Aorta (tissue), 5 donors: ENCODE measurements at regions of chr4 and their contacts with region 1.

Region 1: DNA sequence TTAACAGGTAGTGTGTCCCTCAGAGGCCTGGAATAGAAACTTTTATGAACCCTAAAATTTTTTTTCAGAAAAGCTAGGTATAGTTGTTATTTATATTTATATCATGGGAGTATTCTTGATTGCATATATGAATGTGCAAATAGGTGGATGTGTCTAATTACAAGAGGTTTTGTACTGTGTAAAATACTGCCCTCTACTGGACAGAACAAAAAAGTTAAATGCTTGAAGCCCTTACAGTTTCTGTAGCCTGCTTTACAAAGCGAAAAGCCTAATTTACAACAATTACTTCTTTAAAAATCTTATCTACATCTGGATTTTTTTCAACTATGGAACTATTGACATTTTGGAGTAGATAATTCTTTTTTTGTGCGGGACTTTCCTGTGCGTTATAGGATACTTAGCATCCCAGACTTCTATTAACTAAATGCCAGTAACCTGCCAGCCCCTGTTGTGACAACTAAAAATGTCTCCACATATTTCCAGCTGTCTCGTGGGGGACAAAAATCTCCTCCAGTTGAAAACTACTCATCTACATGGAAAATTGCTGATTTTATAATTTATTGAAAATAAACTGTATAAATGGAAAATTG is 35.1 kb downstream of the ENPEP start:
- DNase-seq: no peak
- ATAC-seq: peak; percentile 76
- H3K4me3 ChIP-seq: no peak overlapping the region
- H3K27ac ChIP-seq: no peak overlapping the region
- H3K4me1 ChIP-seq: no peaks in the 10 kb centered on the region
- H3K27me3 ChIP-seq: no peaks in the 10 kb centered on the region

Region 2: DNA sequence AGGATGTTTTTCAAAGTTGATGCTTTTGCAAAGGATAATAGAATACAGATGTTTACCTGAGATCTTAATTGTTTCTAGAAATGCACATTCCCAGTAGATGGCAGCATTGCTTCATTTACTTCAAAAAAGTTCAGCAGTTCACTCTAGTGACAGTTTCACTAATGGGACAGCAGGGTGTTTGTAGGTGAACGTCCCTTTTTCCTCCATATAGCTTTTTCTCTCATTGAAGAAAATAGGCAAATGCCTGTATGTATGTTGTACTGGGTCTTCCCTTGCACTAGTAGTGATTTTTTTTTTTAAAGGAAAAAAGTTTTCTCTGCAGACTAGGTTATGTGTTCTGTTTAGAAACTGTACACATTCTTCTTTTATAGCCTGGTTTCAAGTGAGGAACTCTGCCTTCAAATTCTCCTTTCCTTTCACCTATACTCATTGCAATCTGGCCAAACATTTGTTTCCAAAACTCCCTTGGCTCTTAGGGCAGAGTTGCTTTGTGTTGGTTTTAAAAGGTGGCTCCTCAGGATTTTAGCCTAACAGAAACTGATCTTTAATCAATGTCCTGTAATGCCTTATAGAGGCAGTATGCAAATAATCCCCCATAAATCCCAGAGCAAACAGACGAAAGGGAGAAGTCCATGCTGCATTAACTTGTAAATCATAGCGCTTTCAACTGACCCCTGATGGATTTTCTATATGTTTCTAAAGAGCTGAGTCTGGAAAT is 512.0 kb before region 1 on chr4:
- intact Hi-C with region 1: loop called (anchors 2 kb)
- DNase-seq: no peak
- ATAC-seq: no peak
- H3K4me3 ChIP-seq: no peak overlapping the region
- H3K27ac ChIP-seq: no peak overlapping the region
- H3K4me1 ChIP-seq: no peaks in the 10 kb centered on the region
- H3K27me3 ChIP-seq: no peaks in the 10 kb centered on the region

Region 3: DNA sequence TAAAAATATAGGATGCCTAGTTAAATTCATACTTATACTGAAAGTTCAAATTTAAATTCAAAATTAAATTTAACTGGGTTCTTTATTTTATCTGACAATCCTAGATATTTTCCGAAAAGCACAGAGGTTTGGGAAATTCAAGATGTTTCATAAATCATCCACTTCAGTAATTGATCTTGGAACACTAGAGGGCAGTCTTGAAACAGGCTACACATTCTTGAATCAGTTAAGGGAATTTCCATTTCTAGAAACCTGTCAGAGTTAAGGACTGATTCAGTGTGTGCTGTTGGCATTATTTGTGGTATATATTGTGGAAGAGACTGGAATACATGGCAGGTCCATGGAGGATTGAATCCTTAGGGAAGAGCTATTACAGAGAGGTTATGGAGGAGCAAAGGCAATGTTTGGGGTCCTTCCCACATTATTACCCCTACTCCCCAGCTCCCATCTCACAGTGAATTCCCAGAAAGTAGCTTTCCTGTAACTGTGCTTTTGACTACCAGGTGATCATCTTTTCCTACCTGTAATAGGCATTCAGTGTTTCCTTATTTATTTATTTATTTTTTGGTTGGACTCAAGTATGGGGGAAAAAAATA is 505.5 kb before region 1 on chr4:
- intact Hi-C with region 1: loop called in 1 of 2 experiments (anchors 2 kb)
- DNase-seq: no peak
- ATAC-seq: no peak
- H3K4me3 ChIP-seq: no peak overlapping the region
- H3K27ac ChIP-seq: no peak overlapping the region
- H3K4me1 ChIP-seq: no peaks in the 10 kb centered on the region
- H3K27me3 ChIP-seq: no peaks in the 10 kb centered on the region

Region 4: DNA sequence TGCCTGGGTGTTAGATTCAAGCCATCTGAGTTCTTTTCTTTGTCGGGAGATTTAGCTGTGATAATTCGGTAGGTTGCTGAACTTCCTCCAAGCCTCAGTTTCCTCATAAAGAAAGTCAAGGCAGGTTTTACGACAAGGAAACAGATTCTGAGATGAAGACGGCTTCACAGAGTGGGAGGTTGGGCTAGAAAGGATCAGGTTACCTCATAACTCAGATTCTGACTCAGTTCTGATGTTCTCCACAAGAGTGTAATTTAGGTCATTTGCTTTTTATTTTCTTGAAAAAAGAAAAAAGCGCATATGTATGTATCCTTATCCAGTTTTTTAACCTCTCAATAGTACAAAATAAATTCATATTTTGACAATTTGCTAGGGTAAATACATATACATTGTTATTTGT is 265.5 kb before region 1 on chr4:
- intact Hi-C with region 1: no loop called
- DNase-seq: no peak
- ATAC-seq: no peak
- H3K4me3 ChIP-seq: no peak overlapping the region
- H3K27ac ChIP-seq: no peak overlapping the region
- H3K4me1 ChIP-seq: no peaks in the 10 kb centered on the region
- H3K27me3 ChIP-seq: no peaks in the 10 kb centered on the region

Region 5: DNA sequence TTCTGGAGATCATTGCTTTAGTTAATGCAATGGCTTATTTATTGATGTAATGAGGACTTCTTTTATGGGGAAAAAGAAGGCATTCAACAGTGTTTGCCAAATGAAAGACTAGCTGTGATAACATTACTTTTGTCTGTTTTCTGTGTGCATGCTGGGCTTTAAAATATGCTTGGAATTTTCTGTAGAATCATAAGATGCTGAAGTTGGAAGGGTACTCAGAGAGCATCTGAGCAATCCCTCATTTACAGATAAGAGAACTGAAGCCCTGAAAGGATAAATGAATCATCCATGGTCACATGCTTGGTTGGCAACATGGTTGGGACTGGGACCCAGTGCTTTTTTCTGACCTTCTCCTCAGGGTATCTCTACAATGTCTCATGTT is 143.2 kb after region 1 on chr4:
- intact Hi-C with region 1: no loop called
- DNase-seq: no peak
- ATAC-seq: no peak
- H3K4me3 ChIP-seq: no peak overlapping the region
- H3K27ac ChIP-seq: no peak overlapping the region
- H3K4me1 ChIP-seq: no peaks in the 10 kb centered on the region
- H3K27me3 ChIP-seq: peaks cover 0 to 1% of the 10 kb centered on the region in 2 donors

Region 6: DNA sequence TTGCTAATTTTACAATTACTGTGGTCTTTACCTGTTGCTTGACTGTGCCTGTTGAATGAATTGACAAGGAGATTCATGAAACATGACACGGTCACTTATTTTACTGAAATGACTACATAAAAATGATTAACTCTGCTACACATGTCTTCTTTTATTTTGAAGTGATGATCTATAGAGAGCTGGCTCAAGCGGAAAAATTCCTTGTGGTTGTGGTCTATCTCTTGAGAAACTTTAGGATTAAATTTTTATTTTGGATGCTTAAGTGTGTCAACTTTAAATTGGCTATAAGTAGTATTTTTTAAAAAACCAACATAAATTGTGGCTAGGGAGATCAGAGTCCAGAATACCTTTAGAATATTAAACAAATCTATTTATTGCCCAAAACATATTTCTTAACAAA is 243.7 kb after region 1 on chr4:
- intact Hi-C with region 1: no loop called
- DNase-seq: no peak
- ATAC-seq: no peak
- H3K4me3 ChIP-seq: no peak overlapping the region
- H3K27ac ChIP-seq: no peak overlapping the region
- H3K4me1 ChIP-seq: no peaks in the 10 kb centered on the region
- H3K27me3 ChIP-seq: peaks cover 0 to 4% of the 10 kb centered on the region in 2 donors